ENCODE measurements at regions of chr7 and their contacts with region 1.

Region 1: DNA sequence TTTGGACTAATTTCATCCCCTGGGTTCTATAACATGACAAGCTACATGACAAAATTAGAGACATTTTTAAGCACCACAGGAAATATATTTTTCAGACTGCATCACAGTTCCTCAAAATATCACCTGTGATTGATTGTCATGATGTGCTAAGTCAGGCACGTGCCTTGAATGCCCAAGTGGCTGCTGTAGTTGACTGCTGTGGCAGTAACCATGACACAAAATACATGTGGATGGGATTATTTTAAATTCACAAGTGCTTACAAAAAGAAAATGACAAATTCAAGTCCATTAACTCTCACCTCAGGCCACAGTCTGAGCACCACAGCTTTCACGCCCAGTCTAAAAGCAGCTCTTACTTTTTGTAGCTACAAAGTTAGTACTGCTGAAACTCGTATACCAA is 45.5 kb downstream of the TNPO3 start:
- DNase-seq: peak; percentile 11
- H3K4me3 Mint-ChIP-seq: no peak overlapping the region
- H3K27ac Mint-ChIP-seq: no peak overlapping the region
- H3K4me1 Mint-ChIP-seq: peaks cover 46% of the 10 kb centered on the region
- H3K27me3 Mint-ChIP-seq: no peaks in the 10 kb centered on the region

Region 2: GRCh38 chr7:128783143-128783861 is 226.1 kb before region 1 on chr7:
- CTCF ChIA-PET with region 1: no interaction called
- POLR2A ChIA-PET with region 1: no interaction called
- intact Hi-C with region 1: no loop called
- DNase-seq: peak; percentile 20
- H3K4me3 Mint-ChIP-seq: no peak overlapping the region
- H3K27ac Mint-ChIP-seq: no peak overlapping the region
- H3K4me1 Mint-ChIP-seq: no peaks in the 10 kb centered on the region
- H3K27me3 Mint-ChIP-seq: no peaks in the 10 kb centered on the region

Region 3: DNA sequence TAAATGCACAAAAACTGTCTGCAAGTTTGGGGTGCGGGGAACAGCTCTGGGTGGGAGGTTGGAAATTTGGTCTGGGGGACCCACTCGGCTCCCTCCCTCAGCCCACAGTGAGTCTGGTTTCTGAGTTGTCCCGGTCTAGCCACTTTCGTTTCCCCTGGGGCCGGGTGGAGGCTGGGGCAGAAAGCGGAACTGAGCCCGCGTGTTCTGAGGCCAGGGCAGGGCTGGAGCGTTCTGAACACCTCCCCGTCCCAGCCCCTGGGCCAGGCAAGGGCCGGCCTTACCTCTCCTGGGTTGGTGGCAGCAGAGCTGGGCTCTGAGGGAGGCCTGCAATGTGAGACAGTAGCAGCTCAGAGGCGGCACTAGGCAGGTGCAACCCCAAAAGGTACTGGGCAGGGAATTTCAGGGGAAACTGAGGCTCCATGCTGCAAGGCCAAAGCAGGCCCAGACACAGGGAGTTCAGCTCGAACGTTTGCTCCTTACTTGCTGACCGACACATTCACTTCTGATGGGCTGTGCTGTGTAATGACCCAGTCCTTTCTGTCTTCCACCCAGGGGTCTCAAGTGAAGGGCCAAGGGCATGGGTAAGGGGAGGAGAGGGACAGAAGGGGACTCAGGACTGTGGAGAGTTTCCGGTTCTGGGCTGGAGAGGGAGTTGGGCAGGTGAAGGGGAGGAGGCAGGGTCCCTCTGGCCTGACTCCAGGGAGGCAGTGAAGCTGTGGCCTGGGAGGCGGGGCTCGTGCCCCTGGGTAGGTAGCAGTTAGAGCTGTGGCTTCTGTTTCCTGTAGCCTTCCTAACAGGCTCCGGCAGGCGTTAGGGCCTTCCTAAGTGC is 68.7 kb before region 1 on chr7:
- CTCF ChIA-PET with region 1: interaction called, 3 read pairs
- POLR2A ChIA-PET with region 1: no interaction called
- intact Hi-C with region 1: loop called (anchors 2 kb)
- DNase-seq: peak; percentile 51
- H3K4me3 Mint-ChIP-seq: peak overlapping the region; percentile 58
- H3K27ac Mint-ChIP-seq: peak overlapping the region; percentile 62
- H3K4me1 Mint-ChIP-seq: peaks cover 39% of the 10 kb centered on the region
- H3K27me3 Mint-ChIP-seq: peaks cover 6% of the 10 kb centered on the region

Region 4: DNA sequence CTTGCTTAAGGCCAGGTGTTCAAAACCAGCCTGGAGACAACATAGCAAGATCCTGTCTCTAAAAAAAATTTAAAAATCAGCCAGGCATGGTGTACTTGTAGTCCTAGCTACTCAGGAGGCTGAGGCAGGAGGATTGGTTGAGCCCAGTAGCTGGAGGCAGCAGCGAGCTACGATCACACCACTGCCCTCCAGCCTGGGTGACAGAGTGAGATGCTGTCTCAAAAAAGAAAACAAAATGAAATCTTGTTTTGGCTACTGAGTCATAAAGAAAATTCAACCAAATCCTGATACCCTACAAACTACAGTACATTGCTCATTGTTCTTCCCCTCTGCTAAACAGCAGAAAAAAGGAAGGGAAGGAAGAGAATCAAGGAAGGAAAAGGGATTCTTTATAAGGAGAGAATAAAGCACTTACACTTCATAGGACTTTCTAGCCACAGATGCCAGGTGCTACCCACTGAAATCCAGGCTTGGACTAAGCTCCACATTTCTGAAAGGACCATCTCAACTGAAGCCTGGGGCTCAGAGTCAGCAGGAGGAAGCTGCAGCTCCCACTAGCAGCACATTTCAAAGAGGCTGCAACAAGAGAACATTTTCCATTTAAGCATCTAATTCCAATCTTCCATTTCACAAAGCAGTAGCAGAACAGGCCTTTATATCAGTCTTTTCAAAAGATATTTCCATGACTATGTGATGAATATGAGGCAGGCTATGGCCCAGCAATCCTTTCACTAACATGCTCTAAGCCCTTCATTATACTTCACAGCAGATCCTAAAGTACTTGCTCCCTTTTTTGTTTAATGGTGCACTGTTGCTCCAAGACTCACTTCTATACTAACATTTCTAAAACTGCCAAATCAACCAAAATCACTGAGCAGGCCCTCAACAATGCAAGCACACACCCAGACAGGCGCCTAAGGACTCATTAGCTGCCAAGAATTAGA is 32.0 kb after region 1 on chr7:
- CTCF ChIA-PET with region 1: no interaction called
- POLR2A ChIA-PET with region 1: no interaction called
- intact Hi-C with region 1: loop called (anchors 2 kb)
- DNase-seq: peak; percentile 45
- H3K4me3 Mint-ChIP-seq: no peak overlapping the region
- H3K27ac Mint-ChIP-seq: no peak overlapping the region
- H3K4me1 Mint-ChIP-seq: peaks cover 64% of the 10 kb centered on the region
- H3K27me3 Mint-ChIP-seq: no peaks in the 10 kb centered on the region

Measured in activated CD4-positive, alpha-beta memory T cell treated with anti-CD3 and anti-CD28 coated beads for 36 hours (primary cell).